PC-3 (cell line): ENCODE measurements at regions of chr20 and their contacts with region 1.

Region 1: DNA sequence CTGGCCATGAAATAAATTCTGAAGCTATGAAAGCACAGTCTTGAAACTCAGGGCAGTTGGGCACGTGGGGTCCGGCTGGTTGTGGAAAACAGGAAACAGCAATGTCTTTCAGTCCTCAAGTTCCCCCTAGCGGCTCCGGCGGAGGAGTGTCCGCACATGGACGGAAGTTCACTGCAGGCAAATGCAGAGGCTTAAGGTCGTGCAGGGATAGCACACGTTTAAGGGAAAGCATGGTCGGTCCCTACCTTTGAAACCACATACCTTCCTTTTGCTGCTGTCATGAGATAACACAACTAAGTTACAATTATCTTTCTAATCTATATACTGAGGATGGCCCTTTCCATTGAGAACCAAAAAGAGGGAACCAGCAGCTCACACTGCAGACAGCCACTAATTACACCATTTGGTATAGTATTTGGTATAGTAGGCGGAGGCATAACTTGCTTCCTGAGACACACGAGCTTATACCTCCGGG is 52.6 kb upstream of the NFATC2 start:
- DNase-seq: peak; percentile 91
- ATAC-seq: peak; percentile 97
- H3K4me3 ChIP-seq: no peak overlapping the region
- H3K27ac ChIP-seq: 0 out of 2 replicates have a peak overlapping the region, but pooled peaks have one; percentile 6
- H3K4me1 ChIP-seq: peaks cover 4% of the 10 kb centered on the region; the same call in 1 of the 2 replicates
- H3K27me3 ChIP-seq: no peaks in the 10 kb centered on the region
- CTCF ChIP-seq: peak; percentile 97

Region 2: DNA sequence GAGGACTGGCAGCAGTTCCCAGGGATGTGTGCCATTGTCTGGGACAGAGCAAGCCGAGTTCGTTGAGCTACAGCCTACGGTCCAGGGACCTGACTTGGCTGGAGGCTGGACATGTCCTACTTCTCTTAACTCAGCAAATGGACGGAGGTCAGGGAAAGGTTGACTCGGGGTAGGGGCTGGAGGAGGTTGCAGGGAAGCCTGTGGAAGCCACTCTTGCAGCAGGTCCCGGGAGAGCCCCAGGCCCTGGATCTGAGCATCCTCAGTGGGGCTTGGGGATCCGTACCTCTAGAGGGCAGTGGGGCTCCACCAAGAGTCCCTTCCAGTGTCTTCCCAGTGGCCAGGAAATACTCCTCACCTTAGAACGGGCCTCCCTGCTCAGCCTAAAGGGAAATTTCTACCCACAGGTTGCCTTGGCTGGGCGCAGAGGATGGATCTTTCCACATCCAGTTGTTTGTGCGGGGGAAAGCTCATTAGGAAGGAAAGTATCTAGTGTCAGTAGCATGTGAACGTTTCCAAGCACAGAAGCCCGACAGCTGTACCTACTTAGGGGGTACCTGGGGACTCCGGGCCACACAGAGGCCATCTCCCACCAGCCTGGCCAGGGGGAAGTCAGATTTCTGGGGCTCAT is 222.8 kb before region 1 on chr20:
- CTCF ChIA-PET with region 1: interaction called, 4 read pairs
- POLR2A ChIA-PET with region 1: interaction called, 3 read pairs
- intact Hi-C with region 1: loop called (anchors 1 kb)
- DNase-seq: peak; percentile 96
- ATAC-seq: peak; percentile 100
- H3K4me3 ChIP-seq: no peak overlapping the region
- H3K27ac ChIP-seq: no peak overlapping the region
- H3K4me1 ChIP-seq: peaks cover 14% of the 10 kb centered on the region; the same call in 1 of the 2 replicates
- H3K27me3 ChIP-seq: no peaks in the 10 kb centered on the region
- CTCF ChIP-seq: peak; percentile 99

Region 3: GRCh38 chr20:51385646-51386530 is 209.2 kb before region 1 on chr20:
- CTCF ChIA-PET with region 1: interaction called, 5 read pairs
- POLR2A ChIA-PET with region 1: no interaction called
- intact Hi-C with region 1: loop called (anchors 1 kb)
- DNase-seq: peak; percentile 74
- ATAC-seq: no peak
- H3K4me3 ChIP-seq: no peak overlapping the region
- H3K27ac ChIP-seq: no peak overlapping the region; the same call in 1 of the 2 replicates
- H3K4me1 ChIP-seq: peaks cover 64% of the 10 kb centered on the region
- H3K27me3 ChIP-seq: no peaks in the 10 kb centered on the region
- CTCF ChIP-seq: peak; percentile 95

Region 4: DNA sequence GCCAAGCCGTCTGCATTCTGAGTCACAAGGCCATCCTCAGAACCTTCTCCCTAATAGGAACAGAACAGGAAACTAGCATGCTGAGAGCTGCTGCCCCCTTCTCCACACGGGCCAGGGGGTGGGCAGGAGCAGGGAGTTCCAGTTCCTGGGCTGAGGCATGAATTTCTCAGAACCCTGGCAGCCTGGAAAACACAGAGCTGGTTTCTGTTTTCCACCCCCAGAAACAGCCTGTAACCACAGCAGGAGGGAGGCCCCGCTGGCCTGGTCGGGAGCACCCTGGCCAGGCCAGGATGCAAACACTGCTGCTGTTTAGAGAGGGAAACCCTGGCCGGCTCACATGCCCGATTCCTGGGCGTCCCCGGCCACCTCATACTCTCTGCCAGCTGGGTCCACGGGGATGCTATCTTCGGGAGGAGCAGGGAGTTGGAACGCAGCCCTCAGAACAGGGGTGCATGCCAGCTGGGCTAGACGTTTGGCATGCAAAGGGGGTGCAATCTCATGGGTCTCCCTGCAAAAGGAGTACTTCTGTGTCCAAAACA is 182.7 kb before region 1 on chr20:
- CTCF ChIA-PET with region 1: interaction called, 17 read pairs
- POLR2A ChIA-PET with region 1: no interaction called
- intact Hi-C with region 1: no loop called
- DNase-seq: no peak
- ATAC-seq: no peak
- H3K4me3 ChIP-seq: no peak overlapping the region
- H3K27ac ChIP-seq: no peak overlapping the region
- H3K4me1 ChIP-seq: no peaks in the 10 kb centered on the region
- H3K27me3 ChIP-seq: no peaks in the 10 kb centered on the region
- CTCF ChIP-seq: no peak

Region 5: GRCh38 chr20:51487565-51488268 is 107.4 kb before region 1 on chr20:
- CTCF ChIA-PET with region 1: no interaction called
- POLR2A ChIA-PET with region 1: interaction called, 34 read pairs
- intact Hi-C with region 1: no loop called
- DNase-seq: peak; percentile 99
- ATAC-seq: peak; percentile 99
- H3K4me3 ChIP-seq: peak overlapping the region; percentile 63
- H3K27ac ChIP-seq: peak overlapping the region; percentile 92
- H3K4me1 ChIP-seq: peaks cover 25% of the 10 kb centered on the region
- H3K27me3 ChIP-seq: no peaks in the 10 kb centered on the region
- CTCF ChIP-seq: no peak

Region 6: GRCh38 chr20:51541189-51542032 is 53.7 kb before region 1 on chr20:
- CTCF ChIA-PET with region 1: no interaction called
- POLR2A ChIA-PET with region 1: interaction called, 19 read pairs
- intact Hi-C with region 1: no loop called
- DNase-seq: no peak
- ATAC-seq: peak; percentile 23; the same call in 1 of the 2 replicates
- H3K4me3 ChIP-seq: peak overlapping the region; percentile 69
- H3K27ac ChIP-seq: no peak overlapping the region
- H3K4me1 ChIP-seq: peaks cover 21% of the 10 kb centered on the region
- H3K27me3 ChIP-seq: no peaks in the 10 kb centered on the region
- CTCF ChIP-seq: no peak

Region 7: GRCh38 chr20:51667002-51667408 is 71.9 kb after region 1 on chr20:
- CTCF ChIA-PET with region 1: no interaction called
- POLR2A ChIA-PET with region 1: interaction called, 17 read pairs
- intact Hi-C with region 1: no loop called
- DNase-seq: peak; percentile 81
- ATAC-seq: peak; percentile 61
- H3K4me3 ChIP-seq: no peak overlapping the region
- H3K27ac ChIP-seq: peak overlapping the region; percentile 89
- H3K4me1 ChIP-seq: peaks cover 42% of the 10 kb centered on the region
- H3K27me3 ChIP-seq: no peaks in the 10 kb centered on the region
- CTCF ChIP-seq: no peak

Region 8: DNA sequence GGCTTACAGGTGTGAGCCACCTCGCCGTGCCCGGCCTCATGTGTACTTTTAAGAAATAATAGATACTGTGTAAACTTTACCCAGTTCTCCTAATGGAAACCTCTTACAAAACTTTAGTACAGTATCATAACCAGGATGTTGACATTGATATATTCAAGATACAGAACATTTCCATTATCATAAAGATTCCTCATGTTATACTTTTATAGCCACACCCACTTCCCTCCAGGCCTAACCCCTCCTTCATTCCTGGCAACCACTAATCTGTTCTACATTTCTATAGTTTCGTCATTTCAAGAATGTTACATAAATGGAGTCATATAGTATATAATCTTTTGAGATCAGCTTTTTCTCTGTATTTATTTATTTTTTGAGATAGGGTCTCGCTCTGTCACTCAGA is 259.8 kb after region 1 on chr20:
- CTCF ChIA-PET with region 1: no interaction called
- POLR2A ChIA-PET with region 1: no interaction called
- intact Hi-C with region 1: no loop called
- DNase-seq: peak; percentile 40
- ATAC-seq: no peak
- H3K4me3 ChIP-seq: no peak overlapping the region
- H3K27ac ChIP-seq: no peak overlapping the region
- H3K4me1 ChIP-seq: peaks cover 4% of the 10 kb centered on the region
- H3K27me3 ChIP-seq: no peaks in the 10 kb centered on the region
- CTCF ChIP-seq: no peak